Left cardiac atrium (tissue), 4 donors: ENCODE measurements at regions of chr7 and their contacts with region 1.

Region 1: GRCh38 chr7:141272417-141272816 is 198.6 kb downstream of the TMEM178B start:
- DNase-seq: no peak
- ATAC-seq: peak in 1 of 2 donors; percentile 47

Region 2: GRCh38 chr7:141354251-141354650 is 81.8 kb after region 1 on chr7:
- intact Hi-C with region 1: no loop called
- DNase-seq: no peak
- ATAC-seq: peak in 1 of 2 donors; percentile 60

Region 3: GRCh38 chr7:141533149-141533949 is 260.9 kb after region 1 on chr7:
- intact Hi-C with region 1: loop called in 1 of 2 experiments (anchors 2 kb)
- DNase-seq: peak; percentile 58
- ATAC-seq: peak; percentile 84 to 88